Calu3 (cell line): ENCODE measurements at regions of chr3 and their contacts with region 1.

Region 1: DNA sequence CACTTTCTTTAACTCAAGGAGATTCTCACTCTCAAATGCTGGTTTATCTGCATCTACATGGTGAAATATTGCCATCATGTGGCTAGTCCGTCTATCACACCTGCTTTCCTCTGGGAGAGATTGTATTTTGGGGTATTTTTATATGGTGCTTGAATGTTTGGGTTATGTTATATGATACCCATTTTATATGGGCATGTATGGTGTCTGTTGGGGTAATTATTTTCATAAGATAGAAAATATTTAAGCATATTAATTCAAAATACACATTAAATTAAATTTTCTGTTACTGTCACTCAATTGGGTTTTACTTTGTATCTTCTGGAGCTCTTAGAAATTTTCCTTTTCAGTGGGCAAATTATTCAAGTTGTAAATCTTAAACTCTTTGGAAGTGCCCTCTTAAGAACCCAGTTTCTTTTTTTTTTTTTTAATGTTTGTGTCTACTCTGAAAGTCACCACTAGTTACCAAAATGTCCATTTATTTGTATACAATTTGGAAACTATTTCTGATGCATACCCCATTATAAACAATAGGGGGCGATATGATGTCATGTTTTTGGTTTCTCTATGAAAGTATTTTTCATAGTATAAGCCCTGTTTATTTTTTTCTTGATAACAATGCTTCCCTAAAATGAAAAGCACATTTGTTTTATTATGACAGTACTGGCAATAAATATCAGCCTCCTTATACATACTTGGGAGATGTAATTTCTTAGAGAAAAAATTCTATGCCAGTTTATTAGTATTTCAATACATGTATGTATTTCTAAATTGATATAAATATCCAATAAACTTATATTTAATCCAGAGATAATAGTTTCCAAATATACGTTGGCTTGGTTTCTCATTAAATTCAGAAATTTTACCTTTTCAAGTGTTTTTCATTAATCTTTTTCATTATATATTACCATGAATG is 36.1 kb upstream of the PLSCR5 start:
- DNase-seq: peak; percentile 56
- H3K4me3 Mint-ChIP-seq: no peak overlapping the region
- H3K27ac Mint-ChIP-seq: no peak overlapping the region
- H3K4me1 Mint-ChIP-seq: no peaks in the 10 kb centered on the region
- H3K27me3 Mint-ChIP-seq: no peaks in the 10 kb centered on the region
- CTCF ChIP-seq: peak; percentile 74

Region 2: DNA sequence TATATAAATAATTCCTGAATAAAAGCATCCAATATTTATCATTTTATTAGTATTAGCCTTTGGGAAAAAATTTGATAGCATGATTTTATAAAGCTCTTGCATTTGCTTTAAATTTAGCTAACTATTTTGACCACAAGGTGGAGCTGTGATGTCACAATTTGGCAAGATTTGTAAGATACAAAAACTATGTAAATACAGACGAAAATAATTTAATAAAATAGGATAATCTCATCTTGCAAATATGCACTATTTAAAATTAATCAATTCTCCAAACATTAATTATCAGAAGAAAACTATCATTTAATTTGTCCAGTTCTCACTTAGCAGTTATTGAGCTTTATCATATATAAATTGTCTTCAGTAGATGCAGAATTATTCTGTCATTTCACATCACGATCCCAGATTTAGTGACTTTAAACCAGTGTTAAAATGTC is 575.6 kb before region 1 on chr3:
- CTCF ChIA-PET with region 1: no interaction called
- intact Hi-C with region 1: loop called (anchors 10 kb)
- DNase-seq: peak; percentile 62
- H3K4me3 Mint-ChIP-seq: no peak overlapping the region
- H3K27ac Mint-ChIP-seq: no peak overlapping the region
- H3K4me1 Mint-ChIP-seq: peaks cover 8% of the 10 kb centered on the region
- H3K27me3 Mint-ChIP-seq: no peaks in the 10 kb centered on the region
- CTCF ChIP-seq: peak; percentile 74

Region 3: GRCh38 chr3:146218880-146219866 is 422.0 kb before region 1 on chr3:
- CTCF ChIA-PET with region 1: no interaction called
- intact Hi-C with region 1: loop called (anchors 2 kb)
- DNase-seq: peak; percentile 75
- H3K4me3 Mint-ChIP-seq: no peak overlapping the region
- H3K27ac Mint-ChIP-seq: no peak overlapping the region
- H3K4me1 Mint-ChIP-seq: peaks cover 38% of the 10 kb centered on the region
- H3K27me3 Mint-ChIP-seq: no peaks in the 10 kb centered on the region
- CTCF ChIP-seq: peak; percentile 79

Region 4: GRCh38 chr3:146334151-146334550 is 307.1 kb before region 1 on chr3:
- CTCF ChIA-PET with region 1: interaction called, 5 read pairs
- intact Hi-C with region 1: loop called (anchors 2 kb)
- DNase-seq: peak; percentile 77
- H3K4me3 Mint-ChIP-seq: no peak overlapping the region
- H3K27ac Mint-ChIP-seq: no peak overlapping the region
- H3K4me1 Mint-ChIP-seq: peaks cover 24% of the 10 kb centered on the region
- H3K27me3 Mint-ChIP-seq: no peaks in the 10 kb centered on the region
- CTCF ChIP-seq: peak; percentile 49

Region 5: GRCh38 chr3:146517684-146518435 is 123.4 kb before region 1 on chr3:
- CTCF ChIA-PET with region 1: no interaction called
- intact Hi-C with region 1: no loop called
- DNase-seq: no peak
- H3K4me3 Mint-ChIP-seq: peak overlapping the region; percentile 8
- H3K27ac Mint-ChIP-seq: peak overlapping the region; percentile 70
- H3K4me1 Mint-ChIP-seq: peaks cover 84% of the 10 kb centered on the region
- H3K27me3 Mint-ChIP-seq: no peaks in the 10 kb centered on the region
- CTCF ChIP-seq: no peak

Region 6: DNA sequence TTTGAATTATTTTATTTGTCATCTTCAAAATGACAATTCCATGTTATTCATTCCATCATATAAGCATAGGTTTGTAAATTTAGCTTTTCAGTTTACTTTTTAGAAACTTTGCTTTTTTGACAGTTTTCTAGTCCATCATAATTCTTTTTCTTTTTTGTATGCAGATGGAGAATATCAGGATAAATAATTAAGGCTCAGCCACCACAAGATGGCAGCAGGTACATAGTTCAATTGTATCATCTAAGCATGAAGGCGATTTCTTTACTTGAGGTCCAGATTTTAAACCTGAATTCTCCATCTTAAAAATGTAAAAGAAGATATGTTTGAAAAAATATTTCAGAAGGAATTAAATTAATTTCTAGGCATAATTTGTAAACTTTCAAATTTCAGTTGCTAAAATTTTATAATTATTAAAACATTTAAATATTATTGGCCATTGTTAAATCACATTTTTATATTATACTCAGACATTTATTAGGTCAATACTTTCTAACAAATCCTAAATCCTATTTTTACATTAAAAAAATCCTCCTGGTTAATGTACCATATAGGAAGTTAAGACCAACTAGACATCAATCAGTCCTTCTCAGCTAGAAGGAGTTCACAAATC is 51.2 kb before region 1 on chr3:
- CTCF ChIA-PET with region 1: interaction called, 7 read pairs
- intact Hi-C with region 1: loop called (anchors 1 kb)
- DNase-seq: peak; percentile 64
- H3K4me3 Mint-ChIP-seq: no peak overlapping the region
- H3K27ac Mint-ChIP-seq: no peak overlapping the region
- H3K4me1 Mint-ChIP-seq: peaks cover 2% of the 10 kb centered on the region
- H3K27me3 Mint-ChIP-seq: no peaks in the 10 kb centered on the region
- CTCF ChIP-seq: peak; percentile 65

Region 7: DNA sequence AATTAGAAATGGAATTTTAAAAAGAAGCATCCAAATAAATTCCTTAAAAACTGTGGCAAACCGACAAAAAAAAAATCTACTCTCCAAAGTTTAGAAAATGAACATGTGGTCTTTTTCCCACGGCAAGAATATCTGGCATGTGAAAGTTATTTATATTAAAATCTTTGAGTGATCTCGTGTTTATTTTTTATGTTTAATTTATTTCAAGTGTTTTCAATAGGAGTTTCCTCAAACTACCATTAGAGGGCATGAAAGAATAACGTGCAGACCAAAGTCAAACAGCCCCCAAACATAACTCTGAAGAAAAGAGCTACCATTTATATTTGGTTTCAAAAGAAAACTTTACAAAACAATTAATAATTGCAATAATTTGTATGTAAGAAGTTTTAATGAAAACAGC is 478.8 kb after region 1 on chr3:
- CTCF ChIA-PET with region 1: no interaction called
- intact Hi-C with region 1: loop called (anchors 1 kb)
- DNase-seq: no peak
- H3K4me3 Mint-ChIP-seq: no peak overlapping the region
- H3K27ac Mint-ChIP-seq: no peak overlapping the region
- H3K4me1 Mint-ChIP-seq: no peaks in the 10 kb centered on the region
- H3K27me3 Mint-ChIP-seq: no peaks in the 10 kb centered on the region
- CTCF ChIP-seq: peak; percentile 47